ENCODE measurements at regions of chr14 and their contacts with region 1.

Region 1: GRCh38 chr14:94548999-94549985 is 11.9 kb upstream of the SERPINA4 start:
- DNase-seq: peak; percentile 29 to 76 (median 60)
- H3K4me3 ChIP-seq: no peak overlapping the region
- H3K27ac ChIP-seq: no peak overlapping the region
- H3K4me1 ChIP-seq: no peaks in the 10 kb centered on the region
- H3K27me3 ChIP-seq: no peaks in the 10 kb centered on the region
- CTCF ChIP-seq: peak; percentile 60 to 93 (median 73)
- POLR2A ChIP-seq: no peak

Region 2: GRCh38 chr14:94322648-94323570 is 226.4 kb before region 1 on chr14 and contains the start of gene SERPINA6:
- intact Hi-C with region 1: no loop called
- DNase-seq: no peak
- H3K4me3 ChIP-seq: no peak within 1 kb of the TSS
- H3K27ac ChIP-seq: no peak within 1 kb of the TSS
- H3K4me1 ChIP-seq: no peaks in the 10 kb centered on the region
- H3K27me3 ChIP-seq: no peaks in the 10 kb centered on the region
- CTCF ChIP-seq: no peak
- POLR2A ChIP-seq: no peak
- total RNA-seq, gene SERPINA6: not detected

Region 3: GRCh38 chr14:94439453-94440057 is 109.7 kb before region 1 on chr14:
- intact Hi-C with region 1: loop called in 1 of 2 experiments (anchors 5 kb)
- DNase-seq: no peak
- H3K4me3 ChIP-seq: no peak overlapping the region
- H3K27ac ChIP-seq: no peak overlapping the region
- H3K4me1 ChIP-seq: no peaks in the 10 kb centered on the region
- H3K27me3 ChIP-seq: no peaks in the 10 kb centered on the region
- CTCF ChIP-seq: no peak
- POLR2A ChIP-seq: no peak

Measured in adrenal gland (tissue), 19 donors.